ENCODE measurements at regions of chr17 and their contacts with region 1.

Region 1: GRCh38 chr17:72539981-72540897 is 419.4 kb downstream of the SOX9 start:
- DNase-seq: no peak
- H3K4me3 ChIP-seq: no peak overlapping the region
- CTCF ChIP-seq: peak; percentile 62

Region 2: GRCh38 chr17:70636517-70637133 is 1903.6 kb before region 1 on chr17:
- in situ Hi-C with region 1: loop called (anchors 25 kb)
- DNase-seq: peak; percentile 33
- H3K4me3 ChIP-seq: no peak overlapping the region
- CTCF ChIP-seq: peak; percentile 58

Region 3: GRCh38 chr17:70767102-70767701 is 1773.0 kb before region 1 on chr17:
- in situ Hi-C with region 1: loop called (anchors 25 kb)
- DNase-seq: peak; percentile 32
- H3K4me3 ChIP-seq: no peak overlapping the region
- CTCF ChIP-seq: peak; percentile 75

Region 4: DNA sequence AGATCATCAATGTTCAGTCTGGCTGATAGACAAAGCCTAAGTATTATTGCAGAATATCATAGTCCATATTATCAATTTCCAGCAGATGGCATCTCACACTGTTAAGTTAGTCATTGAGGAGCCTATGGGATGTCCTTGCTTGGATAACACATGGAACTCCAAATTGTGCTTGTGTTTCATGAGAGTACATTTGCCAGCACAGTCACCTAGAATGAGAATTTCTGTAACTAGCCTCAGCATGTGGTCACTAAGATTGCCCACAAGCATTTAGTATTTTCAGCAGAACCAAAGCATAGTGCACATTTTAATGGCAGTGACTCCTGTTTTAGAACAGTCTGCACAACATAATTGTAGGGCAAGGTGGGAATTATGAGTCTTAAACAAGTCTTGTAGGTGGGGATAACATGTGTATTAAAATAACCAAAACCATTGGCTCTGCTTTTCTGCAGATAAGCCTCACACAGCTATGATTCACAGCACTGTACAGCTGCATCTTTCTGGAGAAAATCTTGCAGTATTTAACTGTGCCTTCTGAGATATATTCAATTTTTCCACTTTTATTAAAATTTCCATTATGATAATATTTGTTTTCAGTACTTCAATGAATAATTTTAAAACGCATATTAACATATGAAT is 1302.2 kb before region 1 on chr17:
- in situ Hi-C with region 1: loop called (anchors 25 kb)
- DNase-seq: peak; percentile 44
- H3K4me3 ChIP-seq: no peak overlapping the region
- CTCF ChIP-seq: peak; percentile 19

Region 5: DNA sequence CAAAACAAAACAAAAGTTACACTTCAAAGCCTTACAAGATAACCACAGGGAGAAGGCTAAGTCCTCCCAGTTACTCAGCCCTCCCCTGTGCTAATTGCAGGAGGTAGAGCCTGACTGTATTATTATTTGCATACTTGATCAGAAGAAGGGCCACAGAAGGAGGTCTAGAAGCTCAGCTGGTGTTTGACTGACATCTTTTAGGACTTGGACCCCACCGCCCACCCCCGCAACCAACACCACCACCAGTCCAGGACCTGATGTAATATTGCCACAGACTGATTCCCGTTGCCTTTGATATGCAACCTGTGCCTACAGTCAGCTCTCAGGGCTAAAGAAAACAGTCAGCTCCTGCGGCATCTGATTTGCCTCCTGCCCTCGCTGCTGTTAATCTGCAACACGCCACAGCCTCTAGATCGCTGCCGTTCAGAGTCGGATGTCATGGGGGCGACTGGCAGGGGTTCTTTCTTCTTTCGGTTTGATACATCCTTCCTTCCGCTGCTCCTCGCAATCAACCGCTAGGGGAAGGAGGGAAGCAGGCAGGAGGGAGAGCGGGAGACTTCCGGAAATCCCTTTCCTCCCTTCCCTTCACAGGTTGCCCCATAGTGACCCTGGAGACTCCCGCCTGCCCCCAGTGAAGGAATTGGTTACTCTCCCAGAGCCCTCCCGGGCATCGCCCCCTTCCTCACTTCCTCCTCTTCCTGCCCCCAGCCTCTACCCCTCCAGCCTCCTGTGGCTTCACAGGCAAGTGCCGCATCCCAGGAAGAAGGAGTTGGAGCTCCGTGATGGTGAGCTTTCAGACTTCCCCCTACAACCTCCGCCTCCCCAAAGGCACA is 510.0 kb before region 1 on chr17:
- in situ Hi-C with region 1: loop called (anchors 25 kb)
- DNase-seq: peak; percentile 35
- H3K4me3 ChIP-seq: peak overlapping the region; percentile 48
- CTCF ChIP-seq: peak; percentile 70

Region 6: DNA sequence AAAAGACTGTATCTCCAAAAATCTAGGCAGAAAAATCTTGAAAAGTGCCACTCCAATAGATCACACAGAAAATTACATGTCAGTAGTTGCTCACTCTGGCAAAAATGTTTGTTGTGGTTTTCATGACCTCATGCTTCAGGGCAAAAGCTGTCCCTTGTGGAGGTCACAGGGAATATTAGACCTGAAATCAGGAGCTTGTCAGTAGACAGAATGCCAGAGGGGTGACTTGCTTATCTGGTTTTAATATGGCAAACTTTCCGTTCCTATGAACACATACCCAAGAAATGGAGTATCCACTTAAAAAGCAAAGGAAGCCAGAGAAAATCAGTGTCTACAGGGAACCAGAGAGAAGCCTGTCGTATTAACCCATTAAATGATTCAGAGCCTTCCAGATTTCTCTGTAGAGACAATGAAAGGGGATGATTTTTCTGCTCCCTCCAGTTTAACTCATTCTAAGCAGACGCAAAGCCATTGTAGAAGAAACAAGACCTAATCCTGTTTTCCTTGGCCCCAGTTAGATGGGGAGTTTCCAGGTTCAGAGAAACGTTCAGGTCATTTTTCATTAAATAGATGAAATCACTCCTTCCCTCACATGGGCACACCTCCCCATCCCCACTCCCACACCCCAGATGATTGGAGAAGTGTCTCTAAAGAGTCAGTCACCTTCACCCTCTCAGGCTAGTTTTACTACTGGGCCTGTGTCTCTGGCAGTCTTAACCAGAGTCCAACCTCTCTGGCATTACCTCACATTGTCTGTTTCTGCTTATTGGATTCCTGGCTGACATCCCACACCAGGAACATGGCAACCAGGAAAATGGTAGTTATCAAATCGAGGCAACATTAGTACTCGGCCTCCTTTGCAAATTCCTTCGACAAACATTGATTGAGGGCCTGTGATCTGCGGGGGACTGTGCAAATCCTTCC is 413.4 kb before region 1 on chr17:
- in situ Hi-C with region 1: loop called (anchors 25 kb)
- DNase-seq: no peak
- H3K4me3 ChIP-seq: no peak overlapping the region
- CTCF ChIP-seq: no peak